ENCODE measurements at regions of chr4 and their contacts with region 1.

Region 1: DNA sequence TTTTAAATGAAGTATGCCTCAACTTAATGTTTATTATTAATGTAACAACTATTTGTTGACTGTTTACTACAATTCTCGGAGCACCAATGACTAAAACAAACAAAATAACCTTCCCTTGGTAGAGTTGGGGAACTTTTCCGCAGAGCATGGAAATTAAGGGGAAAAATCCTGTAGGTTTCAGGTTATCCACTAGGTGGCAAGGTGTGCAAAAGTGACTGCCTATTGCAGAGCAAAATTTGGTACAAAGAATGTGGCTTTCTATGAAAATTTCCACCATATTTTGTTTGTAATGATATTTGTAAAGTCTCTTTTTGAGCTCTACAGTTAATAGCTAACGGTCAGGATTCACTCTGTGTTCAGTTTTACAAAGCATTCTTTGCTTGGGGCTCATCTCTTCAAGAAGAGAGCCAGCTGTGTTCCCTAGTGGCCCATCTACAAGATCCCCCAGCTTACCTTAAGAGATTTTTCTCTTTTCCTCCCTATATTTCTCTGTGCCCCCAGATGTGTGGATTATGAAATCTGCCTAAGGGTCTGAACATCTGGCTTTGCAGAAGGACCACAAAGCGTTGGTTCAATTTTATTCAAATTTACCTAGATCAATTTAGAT is 61.1 kb downstream of the FBXO8 start:
- DNase-seq: peak; percentile 52
- H3K4me3 Mint-ChIP-seq: no peak overlapping the region
- H3K27ac Mint-ChIP-seq: no peak overlapping the region
- H3K4me1 Mint-ChIP-seq: no peaks in the 10 kb centered on the region
- H3K27me3 Mint-ChIP-seq: no peaks in the 10 kb centered on the region
- CTCF ChIP-seq: peak; percentile 58

Region 2: DNA sequence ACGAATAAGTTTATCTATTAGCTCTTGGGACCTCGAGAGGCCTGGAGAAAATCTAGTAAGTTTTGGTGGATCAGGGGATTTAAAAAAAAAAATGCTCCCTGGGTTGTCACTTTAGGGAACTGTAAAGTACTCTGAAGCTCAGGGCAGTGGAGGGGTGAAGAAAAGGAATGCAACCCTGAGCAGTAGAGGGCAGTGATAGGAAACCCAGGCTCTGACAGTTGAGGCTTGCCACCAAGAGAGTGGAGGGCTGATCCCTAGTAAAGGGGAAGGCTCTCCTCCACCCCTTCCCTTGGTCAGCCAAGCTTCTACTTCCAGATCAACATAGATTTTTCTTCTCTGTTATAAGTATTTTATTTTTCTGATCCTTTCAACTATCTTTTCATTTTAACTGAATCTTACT is 12.0 kb before region 1 on chr4:
- CTCF ChIA-PET with region 1: interaction called, 17 read pairs
- POLR2A ChIA-PET with region 1: no interaction called
- intact Hi-C with region 1: no loop called
- DNase-seq: no peak
- H3K4me3 Mint-ChIP-seq: no peak overlapping the region
- H3K27ac Mint-ChIP-seq: no peak overlapping the region
- H3K4me1 Mint-ChIP-seq: no peaks in the 10 kb centered on the region
- H3K27me3 Mint-ChIP-seq: peaks cover 23% of the 10 kb centered on the region
- CTCF ChIP-seq: no peak

Region 3: DNA sequence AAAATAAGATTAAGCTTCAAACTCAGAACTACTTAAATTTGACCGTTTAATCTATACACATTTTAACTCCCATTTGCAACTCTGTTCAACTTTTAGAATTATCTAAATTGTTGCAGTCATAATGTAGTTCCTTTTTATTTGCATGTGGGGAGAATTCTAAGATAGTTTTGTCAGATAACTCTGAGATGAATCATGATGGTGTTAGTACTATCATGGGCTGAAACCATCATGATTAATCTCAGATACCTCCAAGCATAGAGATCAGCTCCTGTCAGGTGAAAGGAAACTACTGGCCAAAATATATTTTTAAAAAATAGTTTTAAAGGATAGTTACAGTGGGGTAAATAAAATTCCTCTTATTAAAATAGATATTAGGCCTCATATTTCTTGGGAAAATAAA is 22.1 kb after region 1 on chr4:
- CTCF ChIA-PET with region 1: interaction called, 11 read pairs
- POLR2A ChIA-PET with region 1: interaction called, 3 read pairs
- intact Hi-C with region 1: no loop called
- DNase-seq: no peak
- H3K4me3 Mint-ChIP-seq: no peak overlapping the region
- H3K27ac Mint-ChIP-seq: no peak overlapping the region
- H3K4me1 Mint-ChIP-seq: peaks cover 5% of the 10 kb centered on the region
- H3K27me3 Mint-ChIP-seq: no peaks in the 10 kb centered on the region
- CTCF ChIP-seq: no peak

Region 4: GRCh38 chr4:174318829-174319764 is 96.7 kb after region 1 on chr4:
- CTCF ChIA-PET with region 1: interaction called, 65 read pairs
- POLR2A ChIA-PET with region 1: no interaction called
- intact Hi-C with region 1: loop called (anchors 1 kb)
- DNase-seq: peak; percentile 48
- H3K4me3 Mint-ChIP-seq: no peak overlapping the region
- H3K27ac Mint-ChIP-seq: no peak overlapping the region
- H3K4me1 Mint-ChIP-seq: peaks cover 8% of the 10 kb centered on the region
- H3K27me3 Mint-ChIP-seq: no peaks in the 10 kb centered on the region
- CTCF ChIP-seq: peak; percentile 52